Naive thymus-derived CD4-positive, alpha-beta T cell (primary cell): ENCODE measurements at regions of chr2 and their contacts with region 1.

Region 1: DNA sequence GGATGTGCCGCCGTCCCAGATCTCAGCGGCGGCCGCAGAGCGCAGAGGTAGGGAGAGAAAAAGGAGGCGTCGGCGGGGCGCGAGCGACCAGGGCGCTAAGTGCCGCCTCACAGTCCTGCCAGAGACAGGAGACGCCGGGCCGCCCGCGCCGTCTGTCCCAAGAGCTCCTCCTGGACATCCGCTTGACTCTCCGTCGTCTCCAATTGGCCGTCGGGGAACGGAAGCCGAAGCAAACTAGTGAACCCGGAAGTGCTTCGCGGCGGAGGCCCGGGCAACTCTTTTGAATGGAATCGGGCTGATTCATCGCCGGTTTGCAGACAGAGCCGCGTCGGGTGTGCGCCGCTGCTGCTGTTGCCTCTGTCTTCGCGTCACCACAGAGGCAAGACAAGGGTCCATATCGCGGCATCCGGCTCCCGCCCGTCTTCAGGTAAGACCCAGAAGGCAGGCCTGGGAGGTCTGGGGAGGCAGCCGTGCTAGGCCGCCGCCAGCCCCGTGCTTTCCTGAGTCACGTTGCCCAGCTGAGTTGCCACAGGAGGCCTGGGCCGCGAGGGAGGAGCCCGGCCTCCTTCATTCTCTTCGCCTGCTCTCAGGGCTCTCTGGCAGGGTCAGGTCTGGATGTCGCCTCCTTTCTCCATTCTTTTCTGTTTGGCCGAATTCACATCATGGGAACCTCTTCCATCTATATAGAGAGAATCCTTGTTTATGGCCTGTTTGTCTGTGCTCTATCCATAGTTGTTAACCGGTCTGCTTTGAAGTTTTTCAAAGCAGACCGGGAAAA is at the start of gene PSMD14:
- DNase-seq: peak; percentile 67 to 88 (median 85)
- ATAC-seq: peak; percentile 95
- H3K4me3 ChIP-seq: peak within 1 kb of the TSS; percentile 94
- H3K4me3 Mint-ChIP-seq: peak within 1 kb of the TSS; percentile 89 to 98 (median 95)
- H3K27ac ChIP-seq: peak within 1 kb of the TSS; percentile 77
- H3K27ac Mint-ChIP-seq: peak within 1 kb of the TSS; percentile 92 to 97 (median 95)
- H3K4me1 ChIP-seq: peaks cover 3 to 19% of the 10 kb centered on the region in 2 donors
- H3K4me1 Mint-ChIP-seq: peaks cover 24 to 65% (median 42%) of the 10 kb centered on the region in 7 donors
- H3K27me3 ChIP-seq: no peaks in the 10 kb centered on the region
- H3K27me3 Mint-ChIP-seq: peaks cover 0 to 9% (median 3%) of the 10 kb centered on the region in 5 donors
- total RNA-seq, gene PSMD14: 13.2 to 69.5 (median 23.2) TPM

Region 2: GRCh38 chr2:160482673-160483072 is 825.7 kb before region 1 on chr2:
- CTCF ChIA-PET with region 1: no interaction called
- POLR2A ChIA-PET with region 1: no interaction called
- intact Hi-C with region 1: loop called in 1 of 2 experiments (anchors 10 kb)
- DNase-seq: peak in 7 of 9 donors; percentile 58 to 87 (median 78)
- ATAC-seq: peak; percentile 97
- H3K4me3 ChIP-seq: no peak overlapping the region
- H3K4me3 Mint-ChIP-seq: peak overlapping the region; percentile 45 to 81 (median 72)
- H3K27ac ChIP-seq: peak overlapping the region; percentile 70
- H3K27ac Mint-ChIP-seq: peak overlapping the region; percentile 73 to 97 (median 95)
- H3K4me1 ChIP-seq: peaks cover 18 to 66% of the 10 kb centered on the region in 2 donors
- H3K4me1 Mint-ChIP-seq: peaks cover 33 to 100% (median 85%) of the 10 kb centered on the region in 7 donors
- H3K27me3 ChIP-seq: no peaks in the 10 kb centered on the region
- H3K27me3 Mint-ChIP-seq: no peaks in the 10 kb centered on the region

Region 3: DNA sequence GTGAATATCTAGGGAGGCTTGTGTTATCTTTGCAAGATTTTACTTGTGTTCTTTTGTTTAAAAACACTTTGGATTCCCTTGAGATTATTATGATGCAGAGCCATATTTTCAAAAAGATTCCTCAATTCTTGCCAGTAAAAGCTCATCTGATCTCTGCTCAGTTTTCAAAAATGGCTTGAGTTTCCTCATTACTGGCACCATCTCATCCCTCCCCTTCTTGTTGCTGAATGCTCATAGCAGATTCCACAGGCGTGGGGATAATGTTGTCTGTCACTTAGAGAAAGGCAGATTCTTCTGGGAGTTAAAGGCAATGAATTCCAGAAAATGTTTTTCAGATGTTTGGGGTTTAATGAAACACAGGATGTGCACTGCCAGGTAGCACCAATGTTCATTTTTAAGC is 318.6 kb before region 1 on chr2:
- CTCF ChIA-PET with region 1: no interaction called
- POLR2A ChIA-PET with region 1: no interaction called
- intact Hi-C with region 1: no loop called
- DNase-seq: no peak
- ATAC-seq: no peak
- H3K4me3 ChIP-seq: no peak overlapping the region
- H3K4me3 Mint-ChIP-seq: no peak overlapping the region
- H3K27ac ChIP-seq: no peak overlapping the region
- H3K27ac Mint-ChIP-seq: no peak overlapping the region
- H3K4me1 ChIP-seq: no peaks in the 10 kb centered on the region
- H3K4me1 Mint-ChIP-seq: peaks cover 5 to 13% (median 11%) of the 10 kb centered on the region in 7 donors
- H3K27me3 ChIP-seq: no peaks in the 10 kb centered on the region
- H3K27me3 Mint-ChIP-seq: peaks cover 0 to 23% (median 0%) of the 10 kb centered on the region in 5 donors

Region 4: GRCh38 chr2:161010556-161010955 is 297.8 kb before region 1 on chr2:
- CTCF ChIA-PET with region 1: no interaction called
- POLR2A ChIA-PET with region 1: no interaction called
- intact Hi-C with region 1: no loop called
- DNase-seq: no peak
- ATAC-seq: no peak
- H3K4me3 ChIP-seq: no peak overlapping the region
- H3K4me3 Mint-ChIP-seq: no peak overlapping the region
- H3K27ac ChIP-seq: no peak overlapping the region
- H3K27ac Mint-ChIP-seq: no peak overlapping the region
- H3K4me1 ChIP-seq: no peaks in the 10 kb centered on the region
- H3K4me1 Mint-ChIP-seq: no peaks in the 10 kb centered on the region
- H3K27me3 ChIP-seq: no peaks in the 10 kb centered on the region
- H3K27me3 Mint-ChIP-seq: peaks cover 13 to 25% (median 18%) of the 10 kb centered on the region in 5 donors

Region 5: DNA sequence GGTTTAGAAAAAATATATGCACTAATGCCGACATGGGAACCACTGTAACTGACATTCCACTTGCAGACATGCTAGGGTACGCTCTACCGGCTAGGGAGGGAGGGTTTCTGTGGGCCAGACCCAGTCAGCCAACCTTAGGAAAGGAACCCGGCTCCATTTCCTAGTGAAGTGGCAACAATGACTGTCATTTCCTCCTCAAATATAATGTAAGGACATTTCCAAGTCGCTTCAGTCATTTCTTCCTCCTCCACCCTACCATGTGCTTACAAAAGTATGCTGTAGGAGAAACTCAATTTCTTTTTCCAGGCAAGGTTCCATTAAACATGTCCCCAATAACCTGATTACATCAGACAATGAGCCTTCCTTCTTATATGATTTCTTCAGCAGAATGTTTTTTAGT is 64.5 kb before region 1 on chr2:
- CTCF ChIA-PET with region 1: no interaction called
- POLR2A ChIA-PET with region 1: interaction called, 5 read pairs
- intact Hi-C with region 1: loop called (anchors 1 to 2 kb)
- DNase-seq: peak in 3 of 9 donors; percentile 18 to 22 (median 18)
- ATAC-seq: no peak
- H3K4me3 ChIP-seq: peak overlapping the region; percentile 61
- H3K4me3 Mint-ChIP-seq: peak overlapping the region; percentile 82 to 98 (median 92)
- H3K27ac ChIP-seq: peak overlapping the region; percentile 83
- H3K27ac Mint-ChIP-seq: peak overlapping the region; percentile 88 to 96 (median 94)
- H3K4me1 ChIP-seq: peaks cover 15 to 25% of the 10 kb centered on the region in 2 donors
- H3K4me1 Mint-ChIP-seq: peaks cover 15 to 73% (median 65%) of the 10 kb centered on the region in 7 donors
- H3K27me3 ChIP-seq: no peaks in the 10 kb centered on the region
- H3K27me3 Mint-ChIP-seq: no peaks in the 10 kb centered on the region

Region 6: DNA sequence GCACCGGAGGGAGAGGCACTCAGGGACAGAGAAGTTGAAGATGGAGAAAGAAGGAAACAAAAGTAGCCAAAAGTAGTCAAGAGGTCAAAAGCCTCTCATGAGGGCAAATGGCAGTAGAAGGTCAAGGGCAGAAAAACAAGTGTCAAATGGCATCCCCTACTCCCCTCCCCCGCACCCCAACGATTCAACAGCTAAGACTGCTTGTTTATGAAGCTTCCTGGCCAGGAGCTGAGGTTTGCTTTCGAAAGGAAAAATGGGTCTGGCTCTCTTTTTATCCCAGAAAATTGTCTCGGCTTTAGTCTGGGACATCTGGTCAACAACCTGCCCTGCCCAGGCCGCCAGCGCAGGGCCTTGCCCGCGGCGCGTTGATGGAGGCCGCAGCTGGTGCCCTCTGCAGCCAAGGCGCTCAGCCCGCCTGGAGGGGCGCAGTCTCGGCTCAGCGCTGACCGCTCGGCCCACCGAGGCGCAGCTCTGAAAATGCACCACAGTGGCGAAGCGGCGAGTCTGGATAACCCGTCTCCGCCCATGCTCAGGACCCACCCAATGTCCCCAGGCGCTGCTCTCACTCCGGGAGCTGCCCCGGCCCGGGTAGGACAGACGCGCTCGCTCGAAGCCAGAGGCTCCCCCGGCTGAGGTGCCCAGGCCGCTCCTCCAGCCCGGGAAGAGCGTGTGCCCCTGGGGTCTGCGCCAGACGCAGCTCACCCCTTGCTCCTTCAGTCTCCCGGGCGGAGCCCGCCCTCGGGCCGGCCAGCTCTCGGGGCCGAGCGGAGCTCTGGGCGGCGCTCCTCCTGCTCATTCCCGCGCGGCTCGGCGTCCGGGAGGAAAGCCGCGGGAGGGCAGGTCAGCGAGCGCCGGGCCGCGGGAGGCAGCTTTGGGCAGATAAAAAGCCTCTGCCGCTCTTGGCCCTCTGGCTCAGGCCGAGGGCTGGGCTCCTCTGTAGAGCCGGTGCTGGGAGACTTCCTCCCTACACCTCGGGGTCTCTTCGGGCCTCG is 106.0 kb after region 1 on chr2:
- CTCF ChIA-PET with region 1: no interaction called
- POLR2A ChIA-PET with region 1: no interaction called
- intact Hi-C with region 1: loop called (anchors 2 to 5 kb)
- DNase-seq: peak in 1 of 9 donors; percentile 33
- ATAC-seq: peak; percentile 63
- H3K4me3 ChIP-seq: peak overlapping the region; percentile 43
- H3K4me3 Mint-ChIP-seq: peak overlapping the region; percentile 54 to 84 (median 74)
- H3K27ac ChIP-seq: no peak overlapping the region
- H3K27ac Mint-ChIP-seq: peak overlapping the region in 1 of 9 donors; percentile 32
- H3K4me1 ChIP-seq: peaks cover 23 to 31% of the 10 kb centered on the region in 2 donors
- H3K4me1 Mint-ChIP-seq: peaks cover 30 to 52% (median 50%) of the 10 kb centered on the region in 7 donors
- H3K27me3 ChIP-seq: peaks cover 7 to 38% of the 10 kb centered on the region in 2 donors
- H3K27me3 Mint-ChIP-seq: peaks cover 52 to 56% (median 53%) of the 10 kb centered on the region in 5 donors

Region 7: DNA sequence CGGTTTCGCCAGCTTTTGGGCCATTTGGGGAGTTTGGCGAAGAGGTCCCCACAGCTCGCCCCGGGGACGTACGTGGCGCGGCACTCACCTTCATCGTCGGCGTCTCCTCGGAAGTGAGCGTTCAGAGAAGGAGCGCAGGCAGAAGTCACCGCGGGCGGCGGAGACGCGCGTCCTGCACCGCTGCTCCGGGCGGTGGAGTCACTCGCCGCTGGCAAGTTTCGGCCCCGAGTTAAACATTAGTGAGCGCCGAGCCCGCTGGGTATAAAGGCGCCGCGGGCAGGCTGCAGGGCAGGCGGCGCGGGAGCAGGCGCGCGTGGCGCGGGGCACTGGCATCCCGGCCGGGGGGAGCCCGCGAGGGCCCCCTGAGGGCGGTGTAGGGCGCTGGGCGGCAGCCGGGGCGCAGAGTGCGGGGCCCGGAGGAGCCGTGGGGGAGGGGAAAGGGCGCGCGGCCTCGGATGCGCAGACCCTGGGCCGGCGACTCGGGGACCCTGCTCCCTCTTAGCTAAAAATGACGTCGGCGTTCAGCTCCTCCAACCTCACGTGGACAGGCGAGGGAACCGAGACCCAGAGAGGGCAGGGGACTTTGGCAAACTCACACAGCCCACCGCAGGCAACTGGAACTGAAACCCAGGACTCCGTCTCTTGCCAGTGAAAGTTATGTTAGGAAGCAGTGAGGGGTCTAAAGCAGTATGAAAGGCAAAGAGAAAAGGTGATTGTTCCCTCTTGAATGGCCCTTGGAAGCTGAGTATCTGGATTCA is 765.7 kb after region 1 on chr2 and contains the start of gene DPP4:
- CTCF ChIA-PET with region 1: no interaction called
- POLR2A ChIA-PET with region 1: no interaction called
- intact Hi-C with region 1: loop called in 1 of 2 experiments (anchors 5 kb)
- DNase-seq: peak; percentile 31 to 68 (median 61)
- ATAC-seq: peak; percentile 88
- H3K4me3 ChIP-seq: peak within 1 kb of the TSS; percentile 95
- H3K4me3 Mint-ChIP-seq: peak within 1 kb of the TSS; percentile 92 to 100 (median 98)
- H3K27ac ChIP-seq: peak within 1 kb of the TSS; percentile 84
- H3K27ac Mint-ChIP-seq: peak within 1 kb of the TSS; percentile 86 to 98 (median 94)
- H3K4me1 ChIP-seq: peaks cover 0 to 28% of the 10 kb centered on the region in 2 donors
- H3K4me1 Mint-ChIP-seq: peaks cover 30 to 60% (median 52%) of the 10 kb centered on the region in 7 donors
- H3K27me3 ChIP-seq: no peaks in the 10 kb centered on the region
- H3K27me3 Mint-ChIP-seq: peaks cover 0 to 5% (median 0%) of the 10 kb centered on the region in 5 donors
- total RNA-seq, gene DPP4: 35.7 to 188 (median 41.6) TPM